Heart right ventricle (tissue), 16 donors: ENCODE measurements at regions of chr6 and their contacts with region 1.

Region 1: DNA sequence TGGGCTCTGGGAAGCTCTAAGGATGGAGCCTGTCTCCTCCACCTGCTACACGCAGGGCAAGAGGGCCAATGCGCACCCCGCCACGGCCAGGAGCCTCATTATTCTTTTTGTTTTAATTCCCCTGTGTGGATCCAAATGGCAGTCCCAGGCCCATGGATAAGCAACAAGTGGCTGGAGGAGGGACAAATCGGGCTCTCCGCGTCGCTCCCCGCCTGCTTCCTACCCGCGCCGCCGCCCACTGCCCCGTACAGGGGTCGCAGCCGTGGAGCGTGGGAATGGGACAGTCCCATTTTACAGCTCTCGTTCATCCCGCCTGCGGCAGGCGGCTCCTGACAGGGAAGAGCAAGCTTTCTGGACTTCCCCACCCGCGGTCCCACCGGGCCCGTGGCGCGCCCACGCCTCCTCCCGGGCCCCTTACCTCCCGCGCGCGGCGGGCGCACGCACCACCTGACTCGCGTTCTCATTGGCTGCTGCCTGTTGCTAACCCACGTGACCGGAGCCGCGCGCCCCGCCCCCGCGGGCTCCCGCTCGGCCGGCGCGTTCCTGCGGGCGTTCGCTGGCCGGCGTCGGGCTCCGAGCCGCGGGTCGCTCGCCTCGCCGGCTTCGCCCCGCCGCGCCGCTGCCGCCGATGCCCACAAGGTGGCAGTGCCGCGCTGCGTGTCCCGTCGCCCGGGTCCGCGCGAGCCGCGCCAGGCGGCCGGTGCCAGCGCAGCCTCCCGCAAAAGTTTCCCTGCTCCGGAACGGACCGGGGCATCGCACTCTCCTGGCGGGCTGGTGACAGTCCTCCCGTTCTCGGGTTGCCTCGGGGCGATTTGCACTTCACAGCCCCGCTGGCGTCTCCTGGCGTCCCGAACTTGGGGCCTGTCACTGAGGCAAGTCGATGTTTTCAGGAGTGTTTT is 93.3 kb downstream of the CD83 start:
- DNase-seq: peak; percentile 95
- ATAC-seq: peak; percentile 93 to 98 (median 96)
- H3K4me3 ChIP-seq: peak overlapping the region; percentile 47 to 95 (median 70)
- H3K27ac ChIP-seq: peak overlapping the region; percentile 32 to 94 (median 88)
- H3K4me1 ChIP-seq: peaks cover 0 to 22% (median 17%) of the 10 kb centered on the region in 9 donors
- H3K27me3 ChIP-seq: no peaks in the 10 kb centered on the region
- CTCF ChIP-seq: peak; percentile 54 to 95 (median 65)

Region 2: GRCh38 chr6:14365393-14365792 is 154.5 kb after region 1 on chr6:
- intact Hi-C with region 1: loop called in 1 of 10 experiments (anchors 10 kb)
- DNase-seq: no peak
- ATAC-seq: no peak
- H3K4me3 ChIP-seq: no peak overlapping the region
- H3K27ac ChIP-seq: no peak overlapping the region
- H3K4me1 ChIP-seq: peaks cover 0 to 46% (median 24%) of the 10 kb centered on the region in 9 donors
- H3K27me3 ChIP-seq: no peaks in the 10 kb centered on the region
- CTCF ChIP-seq: no peak

Region 3: GRCh38 chr6:14584450-14584849 is 373.5 kb after region 1 on chr6:
- intact Hi-C with region 1: loop called in 2 of 10 experiments (anchors 10 kb)
- DNase-seq: no peak
- ATAC-seq: peak in 2 of 8 donors; percentile 49 to 71
- H3K4me3 ChIP-seq: no peak overlapping the region
- H3K27ac ChIP-seq: no peak overlapping the region
- H3K4me1 ChIP-seq: peaks cover 0 to 14% (median 3%) of the 10 kb centered on the region in 9 donors
- H3K27me3 ChIP-seq: no peaks in the 10 kb centered on the region
- CTCF ChIP-seq: peak in 7 of 9 donors; percentile 11 to 49 (median 32)

Region 4: DNA sequence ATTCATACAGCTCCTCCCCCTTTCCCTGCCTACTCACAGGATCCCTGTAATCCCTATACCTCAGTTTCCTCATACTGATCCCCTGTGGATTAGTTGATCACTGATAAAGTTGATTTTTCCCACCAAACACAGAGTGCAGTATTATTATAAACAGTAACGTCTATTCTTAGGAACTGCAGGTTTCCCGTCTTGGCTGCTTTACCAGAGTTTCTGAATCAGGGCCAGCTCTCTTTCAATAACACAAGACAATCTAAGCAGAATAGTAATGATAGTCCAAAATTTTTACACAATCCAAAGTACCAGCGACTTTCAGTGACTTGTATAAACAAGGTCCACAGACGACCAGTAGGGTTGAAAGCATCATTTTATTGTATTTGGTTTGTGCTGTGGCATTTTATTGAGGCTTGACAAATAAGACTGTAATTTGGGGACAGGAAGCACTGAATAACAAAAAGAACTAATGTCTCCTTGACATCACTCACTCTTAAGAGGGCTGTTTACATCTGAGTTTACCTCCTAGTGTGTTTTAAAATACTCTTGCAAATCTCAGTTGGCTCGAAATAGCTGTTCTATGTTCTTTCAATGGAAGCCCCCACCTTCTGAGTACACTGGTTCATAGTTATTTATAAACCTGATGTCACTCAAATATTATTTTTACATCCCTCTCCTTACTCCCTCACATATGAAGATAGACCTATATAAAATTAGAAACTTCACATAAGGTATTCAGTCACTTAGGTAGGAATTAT is 1028.9 kb after region 1 on chr6:
- intact Hi-C with region 1: loop called in 4 of 10 experiments (anchors 5 to 10 kb)
- DNase-seq: peak in 1 of 2 donors; percentile 49
- ATAC-seq: peak; percentile 12 to 84 (median 64)
- H3K4me3 ChIP-seq: peak overlapping the region in 1 of 10 donors; percentile 13
- H3K27ac ChIP-seq: peak overlapping the region in 8 of 10 donors; percentile 2 to 79 (median 61)
- H3K4me1 ChIP-seq: peaks cover 7 to 41% (median 28%) of the 10 kb centered on the region in 9 donors
- H3K27me3 ChIP-seq: no peaks in the 10 kb centered on the region
- CTCF ChIP-seq: peak in 1 of 9 donors; percentile 6

Region 5: DNA sequence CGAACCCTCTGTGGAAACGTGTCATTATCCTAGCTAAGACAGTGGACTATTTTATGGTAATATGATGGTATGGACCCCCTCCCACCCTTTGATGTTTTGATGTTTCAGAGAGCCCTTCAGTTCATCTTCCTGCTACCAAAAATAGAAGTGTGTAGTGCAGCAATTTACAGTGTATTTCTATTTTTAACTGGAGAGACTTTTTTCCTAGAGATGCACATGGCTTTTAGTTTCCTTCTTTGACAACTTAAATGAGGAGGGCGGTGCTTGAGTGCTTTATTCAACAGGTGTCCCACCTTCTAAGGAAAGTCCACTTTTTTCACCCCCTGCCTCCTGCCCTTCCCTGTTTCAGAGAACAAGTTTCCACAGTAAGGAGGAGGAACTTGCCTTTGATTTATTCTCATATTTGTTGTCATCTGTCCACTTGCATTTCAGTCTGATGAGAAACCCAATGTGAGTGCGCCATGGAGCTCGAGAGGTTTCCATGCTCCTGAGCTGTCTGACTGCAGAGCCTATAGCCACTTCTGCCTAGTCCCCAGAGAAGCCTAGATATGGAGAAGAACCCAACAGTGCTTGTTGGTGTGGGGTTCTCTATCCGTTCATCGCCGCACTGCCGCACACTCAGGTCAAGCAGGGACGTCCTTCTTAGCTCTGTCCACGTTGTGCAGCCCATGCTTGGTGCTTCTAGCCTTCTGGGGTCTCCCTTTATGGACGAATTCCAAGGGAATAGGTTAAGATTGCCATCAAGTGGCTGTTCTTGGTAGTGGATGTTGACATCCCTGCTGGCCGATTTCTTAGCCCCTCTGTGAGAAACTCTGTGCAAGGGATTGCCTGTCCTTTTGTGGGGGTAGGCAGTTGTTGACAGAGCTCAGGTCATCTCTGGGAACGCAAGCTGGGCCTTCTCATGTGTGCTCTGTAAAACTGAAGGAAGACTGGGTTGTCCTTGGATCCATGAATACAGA is 1179.1 kb after region 1 on chr6:
- intact Hi-C with region 1: loop called in 4 of 10 experiments (anchors 5 to 10 kb)
- DNase-seq: peak in 1 of 2 donors; percentile 32
- ATAC-seq: peak; percentile 39 to 72 (median 64)
- H3K4me3 ChIP-seq: peak overlapping the region in 1 of 10 donors; percentile 6
- H3K27ac ChIP-seq: peak overlapping the region in 6 of 10 donors; percentile 20 to 63 (median 50)
- H3K4me1 ChIP-seq: peaks cover 19 to 65% (median 52%) of the 10 kb centered on the region in 9 donors
- H3K27me3 ChIP-seq: no peaks in the 10 kb centered on the region
- CTCF ChIP-seq: peak; percentile 36 to 75 (median 61)

Region 6: GRCh38 chr6:15615802-15616201 is 1404.9 kb after region 1 on chr6:
- intact Hi-C with region 1: loop called in 6 of 10 experiments (anchors 5 to 10 kb)
- DNase-seq: no peak
- ATAC-seq: peak in 2 of 8 donors; percentile 42 to 58
- H3K4me3 ChIP-seq: no peak overlapping the region
- H3K27ac ChIP-seq: no peak overlapping the region
- H3K4me1 ChIP-seq: peaks cover 0 to 34% (median 11%) of the 10 kb centered on the region in 9 donors
- H3K27me3 ChIP-seq: no peaks in the 10 kb centered on the region
- CTCF ChIP-seq: no peak